OCI-LY7 (cell line): ENCODE measurements at regions of chr6 and their contacts with region 1.

Region 1: GRCh38 chr6:29834564-29835436 is 7.2 kb downstream of the HLA-G start:
- DNase-seq: peak; percentile 40
- H3K4me3 ChIP-seq: no peak overlapping the region
- H3K27ac ChIP-seq: no peak overlapping the region
- H3K4me1 ChIP-seq: no peaks in the 10 kb centered on the region
- CTCF ChIP-seq: peak; percentile 94

Region 2: GRCh38 chr6:29705389-29706231 is 129.2 kb before region 1 on chr6:
- CTCF ChIA-PET with region 1: no interaction called
- POLR2A ChIA-PET with region 1: no interaction called
- intact Hi-C with region 1: loop called (anchors 2 kb)
- DNase-seq: peak; percentile 27
- H3K4me3 ChIP-seq: no peak overlapping the region
- H3K27ac ChIP-seq: no peak overlapping the region
- H3K4me1 ChIP-seq: peaks cover 13% of the 10 kb centered on the region
- CTCF ChIP-seq: peak; percentile 80

Region 3: DNA sequence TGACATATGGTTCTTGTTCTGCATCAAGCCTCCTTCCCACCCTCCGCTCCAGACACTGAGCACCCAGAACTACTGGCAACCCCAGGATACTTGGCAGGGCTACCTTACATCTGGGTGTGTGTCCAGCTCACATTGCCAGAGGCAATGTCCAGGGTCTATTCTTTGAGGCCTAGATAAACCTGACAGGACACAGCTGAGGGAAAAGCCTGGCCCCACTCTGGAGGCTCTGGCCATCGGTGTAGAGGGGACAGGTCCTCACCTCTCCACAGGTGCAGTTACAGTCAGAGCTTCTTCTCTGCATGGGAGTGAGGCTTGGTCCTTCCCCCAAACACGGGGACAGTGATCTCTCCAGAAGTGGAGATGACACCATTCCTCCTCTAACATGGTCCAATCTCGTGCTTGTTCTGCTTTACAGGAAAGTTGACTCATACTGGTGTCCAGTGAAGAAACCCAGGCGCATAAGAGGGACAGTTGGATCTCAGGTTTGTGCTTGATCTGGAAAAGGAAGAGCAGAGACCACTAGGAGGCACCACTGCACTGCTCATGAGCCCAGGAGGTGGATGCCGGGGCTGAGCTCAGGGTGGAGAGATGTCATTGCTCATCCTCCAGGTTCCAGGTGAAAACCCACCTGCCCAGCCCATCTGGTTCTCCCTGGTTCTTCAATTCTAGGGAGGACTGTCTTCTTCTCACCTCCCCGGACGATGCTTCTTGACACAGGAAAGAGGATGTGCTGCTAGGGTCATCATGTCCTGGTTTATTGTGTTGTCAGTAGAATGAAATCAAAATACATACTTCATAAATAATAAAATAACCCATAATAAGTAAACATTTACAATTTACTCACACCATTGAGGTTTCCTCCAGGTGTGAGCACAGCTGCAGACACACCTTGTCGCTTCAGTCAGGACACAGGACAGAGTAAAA is 96.8 kb before region 1 on chr6:
- CTCF ChIA-PET with region 1: interaction called, 5 read pairs
- POLR2A ChIA-PET with region 1: no interaction called
- intact Hi-C with region 1: loop called (anchors 1 kb)
- DNase-seq: peak; percentile 72
- H3K4me3 ChIP-seq: no peak overlapping the region
- H3K27ac ChIP-seq: no peak overlapping the region
- H3K4me1 ChIP-seq: no peaks in the 10 kb centered on the region
- CTCF ChIP-seq: peak; percentile 89